ENCODE measurements at regions of chr3 and their contacts with region 1.

Region 1: DNA sequence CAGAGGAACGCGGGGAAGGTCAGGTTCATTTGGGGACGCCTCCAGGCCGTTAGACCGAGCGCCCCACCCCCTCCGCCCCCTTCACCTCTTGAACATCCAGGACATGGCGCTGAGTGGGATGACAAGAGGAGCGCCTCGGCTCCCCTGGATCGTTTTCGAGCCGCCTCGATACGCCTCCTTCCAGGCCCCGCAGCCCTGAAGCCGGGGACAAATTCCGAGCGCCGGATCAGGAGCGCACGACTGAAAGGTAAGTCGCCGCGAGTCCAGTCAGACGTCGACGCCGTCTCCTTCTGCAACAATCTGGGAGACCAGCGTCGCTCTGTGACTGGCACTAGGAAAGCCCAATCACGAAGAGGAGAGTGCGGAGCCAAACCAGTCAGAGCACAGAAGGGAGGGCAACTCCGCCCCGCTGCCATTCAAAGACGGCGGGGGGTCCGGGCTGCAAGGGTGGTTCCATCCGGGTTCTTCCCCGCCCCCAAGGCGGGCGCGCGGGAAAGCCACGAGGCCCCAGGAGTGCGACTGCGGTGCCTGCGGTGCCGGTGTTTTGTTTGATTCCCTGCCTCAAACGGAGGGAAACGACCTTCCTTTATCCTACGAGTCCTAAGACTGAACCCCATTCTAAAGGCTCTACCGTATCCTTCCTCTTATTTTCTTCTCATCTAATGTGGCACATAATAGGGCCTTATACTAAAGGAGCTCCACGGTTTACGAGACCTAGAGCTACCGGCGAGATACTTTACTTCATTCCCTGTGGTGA is at the start of gene HLTF:
- DNase-seq: peak; percentile 95
- H3K4me3 ChIP-seq: peak within 1 kb of the TSS; percentile 72
- H3K27ac ChIP-seq: peak within 1 kb of the TSS; percentile 41
- H3K4me1 ChIP-seq: no peaks in the 10 kb centered on the region
- H3K27me3 ChIP-seq: no peaks in the 10 kb centered on the region
- CTCF ChIP-seq: no peak
- total RNA-seq, gene HLTF: 12.3 to 16.4 TPM

Region 2: GRCh38 chr3:148991194-148992026 is 95.0 kb before region 1 on chr3 and contains the start of gene GYG1:
- intact Hi-C with region 1: loop called (anchors 10 kb)
- DNase-seq: peak; percentile 79
- H3K4me3 ChIP-seq: peak within 1 kb of the TSS; percentile 81
- H3K27ac ChIP-seq: peak within 1 kb of the TSS; percentile 81
- H3K4me1 ChIP-seq: no peaks in the 10 kb centered on the region
- H3K27me3 ChIP-seq: no peaks in the 10 kb centered on the region
- CTCF ChIP-seq: no peak
- total RNA-seq, gene GYG1: 26.1 to 32.2 TPM

Measured in colonic mucosa (tissue), 4 donors.